Activated CD4-positive, alpha-beta memory T cell treated with anti-CD3 and anti-CD28 coated beads for 36 hours (primary cell): ENCODE measurements at regions of chr6 and their contacts with region 1.

Region 1: GRCh38 chr6:73580247-73581149 is 59.7 kb upstream of the EEF1A1 start:
- DNase-seq: peak; percentile 92
- H3K4me3 Mint-ChIP-seq: peak overlapping the region; percentile 73
- H3K27ac Mint-ChIP-seq: peak overlapping the region; percentile 97
- H3K4me1 Mint-ChIP-seq: peaks cover 27% of the 10 kb centered on the region
- H3K27me3 Mint-ChIP-seq: peaks cover under 1% of the 10 kb centered on the region

Region 2: DNA sequence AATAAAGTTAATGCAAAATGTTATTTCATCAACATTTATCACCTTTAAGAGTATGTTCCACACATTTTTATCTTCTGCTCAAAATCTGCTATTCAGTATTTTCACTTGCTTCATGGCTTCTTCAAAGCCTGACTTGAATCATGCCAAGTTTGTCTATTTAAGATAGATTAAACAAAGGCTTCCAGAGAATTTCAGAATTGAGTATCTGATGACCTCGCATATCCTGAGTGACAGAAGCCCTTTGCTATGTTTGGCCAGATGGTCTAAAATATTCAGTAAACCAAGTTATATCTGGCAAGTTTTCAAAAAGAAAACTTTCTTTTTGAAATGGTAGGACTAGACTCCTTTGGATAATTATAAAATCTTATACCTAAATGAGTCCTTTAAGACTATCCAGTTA is 1307.5 kb before region 1 on chr6:
- CTCF ChIA-PET with region 1: no interaction called
- POLR2A ChIA-PET with region 1: no interaction called
- intact Hi-C with region 1: no loop called
- DNase-seq: no peak
- H3K4me3 Mint-ChIP-seq: no peak overlapping the region
- H3K27ac Mint-ChIP-seq: no peak overlapping the region
- H3K4me1 Mint-ChIP-seq: no peaks in the 10 kb centered on the region
- H3K27me3 Mint-ChIP-seq: no peaks in the 10 kb centered on the region

Region 3: GRCh38 chr6:73451223-73452107 is 129.0 kb before region 1 on chr6:
- CTCF ChIA-PET with region 1: no interaction called
- POLR2A ChIA-PET with region 1: interaction called, 6 read pairs
- intact Hi-C with region 1: loop called (anchors 2 kb)
- DNase-seq: peak; percentile 61
- H3K4me3 Mint-ChIP-seq: peak overlapping the region; percentile 86
- H3K27ac Mint-ChIP-seq: peak overlapping the region; percentile 93
- H3K4me1 Mint-ChIP-seq: peaks cover 18% of the 10 kb centered on the region
- H3K27me3 Mint-ChIP-seq: no peaks in the 10 kb centered on the region

Region 4: DNA sequence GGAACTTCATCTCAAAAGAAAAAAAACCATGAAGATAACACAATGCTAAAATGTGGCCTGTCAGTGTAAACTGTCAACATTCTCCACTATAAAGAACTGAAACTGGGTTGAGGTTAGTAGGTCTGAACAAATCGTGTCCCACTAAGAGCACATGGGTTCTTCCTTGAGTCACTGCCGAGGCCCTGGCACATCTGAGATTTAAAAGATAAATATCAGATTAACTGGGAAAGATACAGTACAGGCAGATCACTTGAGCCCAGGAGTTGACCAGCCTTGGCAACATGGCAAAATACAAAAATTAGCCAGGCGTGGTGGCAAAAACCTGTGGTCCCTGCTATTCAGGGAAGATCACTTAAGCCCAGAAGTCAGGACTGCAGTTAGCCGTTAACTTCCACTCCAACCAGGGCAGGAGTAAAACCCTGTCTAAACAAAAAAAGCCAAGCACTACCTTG is 65.3 kb before region 1 on chr6:
- CTCF ChIA-PET with region 1: interaction called, 5 read pairs
- POLR2A ChIA-PET with region 1: interaction called, 67 read pairs
- intact Hi-C with region 1: loop called (anchors 1 kb)
- DNase-seq: peak; percentile 19
- H3K4me3 Mint-ChIP-seq: peak overlapping the region; percentile 98
- H3K27ac Mint-ChIP-seq: peak overlapping the region; percentile 87
- H3K4me1 Mint-ChIP-seq: peaks cover 46% of the 10 kb centered on the region
- H3K27me3 Mint-ChIP-seq: peaks cover 10% of the 10 kb centered on the region

Region 5: GRCh38 chr6:73560182-73560732 is 20.2 kb before region 1 on chr6:
- CTCF ChIA-PET with region 1: interaction called, 7 read pairs
- POLR2A ChIA-PET with region 1: interaction called, 3 read pairs
- intact Hi-C with region 1: loop called (anchors 1 kb)
- DNase-seq: peak; percentile 21
- H3K4me3 Mint-ChIP-seq: no peak overlapping the region
- H3K27ac Mint-ChIP-seq: peak overlapping the region; percentile 2
- H3K4me1 Mint-ChIP-seq: peaks cover 19% of the 10 kb centered on the region
- H3K27me3 Mint-ChIP-seq: no peaks in the 10 kb centered on the region

Region 6: DNA sequence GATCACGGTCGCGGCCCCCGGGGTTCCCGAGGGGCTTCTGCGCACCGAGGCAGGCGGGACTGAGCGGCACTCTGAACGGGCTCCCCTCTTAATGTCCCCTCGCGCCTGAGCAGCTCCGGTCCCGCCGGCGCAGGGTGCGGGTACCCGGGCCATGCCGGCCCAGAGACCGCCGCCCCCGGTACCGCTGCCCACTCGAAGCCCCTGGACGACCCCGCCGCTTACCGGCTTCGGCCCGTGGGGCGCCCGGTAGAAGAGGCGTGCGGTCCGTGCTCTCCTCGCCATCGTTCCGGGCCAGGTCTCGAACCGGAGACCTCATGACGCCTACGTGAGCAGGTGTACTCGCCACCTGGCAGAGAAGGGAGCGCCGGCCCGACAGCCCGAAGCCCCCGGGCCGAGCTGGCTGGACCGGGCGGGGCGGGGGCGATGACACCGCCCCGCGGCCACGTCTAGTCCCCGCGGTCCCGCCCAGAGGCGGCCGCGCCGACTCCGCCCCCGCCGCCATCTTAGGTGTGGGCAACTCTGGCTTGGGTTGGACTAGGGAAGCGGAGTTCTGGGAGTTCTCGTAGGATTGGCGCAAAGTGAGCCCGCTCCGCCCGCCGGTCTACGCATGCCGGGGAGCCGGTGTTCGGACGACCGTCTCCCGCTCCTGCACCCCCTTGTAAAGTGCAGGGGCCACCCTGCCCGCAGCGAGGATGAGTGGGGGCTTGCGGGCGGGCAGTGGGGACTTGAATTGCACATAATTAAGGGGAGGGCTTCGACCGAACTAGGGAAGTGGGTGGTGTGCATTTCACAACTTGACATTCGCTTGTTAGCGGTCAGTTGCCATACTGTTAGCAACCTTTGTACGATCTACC is 73.3 kb after region 1 on chr6 and contains the start of gene SLC17A5:
- CTCF ChIA-PET with region 1: interaction called, 8 read pairs
- POLR2A ChIA-PET with region 1: no interaction called
- intact Hi-C with region 1: loop called (anchors 1 kb)
- DNase-seq: peak; percentile 94
- H3K4me3 Mint-ChIP-seq: peak within 1 kb of the TSS; percentile 97
- H3K27ac Mint-ChIP-seq: peak within 1 kb of the TSS; percentile 95
- H3K4me1 Mint-ChIP-seq: peaks cover 23% of the 10 kb centered on the region
- H3K27me3 Mint-ChIP-seq: no peaks in the 10 kb centered on the region
- total RNA-seq, gene SLC17A5: 5.1 to 5.4 TPM

Region 7: DNA sequence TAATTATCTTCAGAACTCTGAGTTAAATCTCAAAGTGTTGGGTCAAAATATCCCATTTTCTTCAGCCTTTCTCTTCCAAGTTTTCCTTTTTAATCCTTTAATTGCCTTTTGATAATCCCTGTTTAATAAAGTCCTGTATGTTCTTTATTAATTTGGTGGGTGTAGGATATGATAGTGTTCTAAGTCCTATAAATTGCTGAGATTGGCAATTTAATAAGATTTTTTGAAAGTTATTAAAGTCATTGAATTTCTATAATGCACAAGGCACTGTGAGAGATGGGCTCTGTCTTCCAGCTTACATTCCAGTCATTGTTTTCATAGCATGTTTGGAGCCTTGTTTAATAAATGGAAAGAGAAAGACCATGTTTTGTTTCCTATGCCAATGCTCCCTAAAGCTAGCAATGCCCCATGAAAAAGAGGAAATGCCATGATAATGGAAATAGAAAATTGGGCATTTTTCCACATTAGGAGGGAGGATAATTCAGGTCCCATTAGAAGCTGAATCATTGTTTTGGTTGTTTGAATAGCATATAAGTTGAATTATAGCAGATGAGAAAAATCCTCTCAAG is 520.3 kb after region 1 on chr6:
- CTCF ChIA-PET with region 1: no interaction called
- POLR2A ChIA-PET with region 1: no interaction called
- intact Hi-C with region 1: no loop called
- DNase-seq: no peak
- H3K4me3 Mint-ChIP-seq: no peak overlapping the region
- H3K27ac Mint-ChIP-seq: no peak overlapping the region
- H3K4me1 Mint-ChIP-seq: no peaks in the 10 kb centered on the region
- H3K27me3 Mint-ChIP-seq: peaks cover 2% of the 10 kb centered on the region

Region 8: DNA sequence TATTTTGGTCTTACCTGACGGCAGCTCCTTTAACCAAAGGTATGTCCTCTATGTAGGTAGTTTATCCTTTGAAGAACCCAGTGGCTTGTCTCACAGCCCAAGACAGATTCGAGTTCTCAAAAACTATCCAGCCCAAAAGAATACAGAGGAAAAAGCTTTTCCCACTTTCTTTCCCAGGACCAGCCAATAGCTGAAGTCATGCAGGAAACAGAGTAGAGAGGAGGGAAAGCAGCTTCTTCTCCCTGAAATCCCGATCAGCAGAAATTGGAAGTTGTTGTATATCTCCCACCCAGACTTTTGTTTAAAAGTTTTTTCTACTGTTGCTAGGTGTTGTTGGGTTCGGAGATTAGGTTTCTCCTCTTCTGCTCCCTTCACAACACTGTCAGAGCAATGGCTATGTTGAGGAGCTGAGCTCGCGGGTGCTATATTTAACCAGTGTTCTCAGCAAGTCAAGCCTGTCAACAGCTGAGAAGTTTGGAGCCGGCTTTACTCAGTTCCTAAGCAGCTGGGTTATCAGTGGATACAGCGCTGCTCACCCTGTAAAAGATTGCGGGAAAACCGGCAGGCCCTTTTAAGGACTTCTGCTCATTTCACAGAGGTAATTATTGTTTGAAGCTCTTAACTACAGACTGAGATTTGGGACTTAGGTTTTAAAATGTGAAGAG is 1913.0 kb after region 1 on chr6 and contains the start of gene FILIP1:
- CTCF ChIA-PET with region 1: no interaction called
- POLR2A ChIA-PET with region 1: no interaction called
- intact Hi-C with region 1: loop called (anchors 10 kb)
- DNase-seq: no peak
- H3K4me3 Mint-ChIP-seq: no peak within 1 kb of the TSS
- H3K27ac Mint-ChIP-seq: no peak within 1 kb of the TSS
- H3K4me1 Mint-ChIP-seq: peaks cover 11% of the 10 kb centered on the region
- H3K27me3 Mint-ChIP-seq: peaks cover 23% of the 10 kb centered on the region
- total RNA-seq, gene FILIP1: not detected